GM13976 (cell line): ENCODE measurements at regions of chr4 and their contacts with region 1.

Region 1: GRCh38 chr4:52126966-52127365 is 75.9 kb downstream of the SPATA18 start:
- DNase-seq: no peak
- CTCF ChIP-seq: no peak

Region 2: DNA sequence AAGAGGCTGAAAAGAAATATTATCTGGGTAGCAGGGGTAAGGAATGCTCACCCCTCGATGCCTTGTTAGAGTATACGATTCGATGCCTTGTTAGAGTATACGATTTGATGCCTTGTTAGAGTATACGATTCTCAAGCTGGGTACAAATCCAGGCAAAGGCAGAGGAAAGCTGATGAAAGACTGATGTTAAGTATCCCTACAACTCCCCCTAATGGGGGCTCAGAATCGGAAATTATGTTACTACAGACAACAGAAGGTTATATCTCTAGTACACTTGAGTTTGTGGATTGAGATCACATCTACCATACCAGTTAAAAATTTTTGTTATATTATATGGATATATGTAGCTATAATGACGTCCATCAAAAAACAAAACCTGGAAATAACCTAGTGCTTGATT is 111.6 kb before region 1 on chr4:
- in situ Hi-C with region 1: loop called (anchors 25 kb)
- DNase-seq: no peak
- CTCF ChIP-seq: no peak